ENCODE measurements at regions of chr10 and their contacts with region 1.

Region 1: GRCh38 chr10:25725918-25726716 is 207.9 kb upstream of the MYO3A start:
- H3K4me3 ChIP-seq: no peak overlapping the region
- H3K27ac ChIP-seq: no peak overlapping the region
- H3K4me1 ChIP-seq: no peaks in the 10 kb centered on the region
- CTCF ChIP-seq: peak; percentile 36

Region 2: DNA sequence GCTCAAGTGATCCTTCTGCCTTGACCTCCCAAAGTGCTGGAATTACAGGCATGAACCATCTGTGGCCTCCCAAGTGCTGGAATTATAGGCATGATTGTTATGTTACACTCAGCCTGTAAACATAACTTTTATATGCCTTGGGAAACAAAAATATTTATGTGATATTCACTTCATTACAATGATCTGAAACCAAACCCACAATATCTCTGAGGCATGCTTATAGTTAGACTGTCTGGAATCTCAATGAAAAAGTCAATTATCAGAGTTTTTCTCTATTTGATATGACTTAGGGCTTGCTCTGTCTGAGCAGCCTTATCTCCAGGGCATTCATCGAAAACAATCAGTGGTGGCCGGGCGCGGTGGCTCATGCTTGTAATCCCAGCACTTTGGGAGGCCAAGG is 12.7 kb after region 1 on chr10:
- CTCF ChIA-PET with region 1: interaction called, 15 read pairs
- POLR2A ChIA-PET with region 1: no interaction called
- H3K4me3 ChIP-seq: no peak overlapping the region
- H3K27ac ChIP-seq: no peak overlapping the region
- H3K4me1 ChIP-seq: no peaks in the 10 kb centered on the region
- CTCF ChIP-seq: no peak